CD4-positive, alpha-beta T cell (primary cell): ENCODE measurements at regions of chr5 and their contacts with region 1.

Region 1: DNA sequence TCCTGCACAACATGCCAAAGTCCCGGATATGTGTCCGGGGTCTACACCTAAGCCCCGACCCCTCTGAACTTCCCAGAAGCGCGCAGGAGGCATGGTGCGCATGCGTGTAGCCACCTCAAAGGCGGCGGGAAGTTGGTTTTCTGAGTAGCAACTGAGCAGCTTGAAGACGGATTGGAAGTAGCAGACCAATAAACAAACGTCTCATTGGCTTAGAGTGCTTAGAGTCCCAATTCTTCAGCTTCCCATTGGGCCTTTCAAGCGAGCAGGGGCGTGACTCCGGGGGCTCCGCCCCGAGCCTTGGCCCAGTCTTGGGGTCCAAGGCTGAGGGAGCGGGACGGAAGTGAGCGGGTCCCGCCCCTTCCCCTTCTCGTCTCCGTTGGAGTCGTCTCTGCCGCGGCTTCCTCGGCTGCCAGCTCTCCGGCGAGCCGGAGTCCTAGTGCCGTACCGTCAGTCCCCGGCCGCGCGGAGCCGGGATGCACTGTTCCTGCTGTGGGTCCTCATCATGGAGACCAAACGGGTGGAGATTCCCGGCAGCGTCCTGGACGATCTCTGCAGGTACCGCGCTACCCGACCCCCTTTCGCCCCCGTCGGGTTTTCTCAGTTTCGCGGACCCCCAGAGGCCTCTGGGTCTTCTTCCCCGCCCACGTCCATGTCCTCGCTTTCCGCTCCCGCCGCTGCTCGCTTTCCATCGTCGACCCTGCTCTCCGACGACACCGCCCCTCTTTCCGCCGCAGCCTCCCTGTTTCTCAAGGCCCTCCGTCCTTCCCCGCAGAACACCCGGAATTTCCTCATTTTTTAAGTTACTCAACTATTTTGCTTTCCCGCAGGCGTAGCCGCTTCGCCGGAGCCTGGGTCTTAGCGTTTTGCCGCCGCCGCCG is at the start of gene DCP2:
- DNase-seq: peak; percentile 87 to 99 (median 94)
- ATAC-seq: peak; percentile 93
- H3K4me3 ChIP-seq: peak within 1 kb of the TSS; percentile 92
- H3K4me3 Mint-ChIP-seq: peak within 1 kb of the TSS; percentile 100
- H3K27ac ChIP-seq: peak within 1 kb of the TSS; percentile 72 to 78
- H3K27ac Mint-ChIP-seq: peak within 1 kb of the TSS; percentile 96
- H3K4me1 ChIP-seq: peaks cover 15% of the 10 kb centered on the region
- H3K4me1 Mint-ChIP-seq: peaks cover 56% of the 10 kb centered on the region
- H3K27me3 ChIP-seq: no peaks in the 10 kb centered on the region
- H3K27me3 Mint-ChIP-seq: no peaks in the 10 kb centered on the region
- CTCF ChIP-seq: no peak
- total RNA-seq, gene DCP2: 86.3 to 87.1 TPM

Region 2: GRCh38 chr5:112860929-112861637 is 115.6 kb before region 1 on chr5 and contains the start of gene SRP19:
- CTCF ChIA-PET with region 1: interaction called, 5 read pairs
- POLR2A ChIA-PET with region 1: interaction called, 21 read pairs
- intact Hi-C with region 1: loop called in 1 of 2 experiments (anchors 5 kb)
- DNase-seq: peak; percentile 82 to 97 (median 86)
- ATAC-seq: peak; percentile 93
- H3K4me3 ChIP-seq: peak within 1 kb of the TSS; percentile 94
- H3K4me3 Mint-ChIP-seq: peak within 1 kb of the TSS; percentile 92
- H3K27ac ChIP-seq: peak within 1 kb of the TSS; percentile 65 to 88
- H3K27ac Mint-ChIP-seq: peak within 1 kb of the TSS; percentile 93
- H3K4me1 ChIP-seq: peaks cover 24% of the 10 kb centered on the region
- H3K4me1 Mint-ChIP-seq: peaks cover 36% of the 10 kb centered on the region
- H3K27me3 ChIP-seq: no peaks in the 10 kb centered on the region
- H3K27me3 Mint-ChIP-seq: peaks cover 12% of the 10 kb centered on the region
- CTCF ChIP-seq: no peak
- total RNA-seq, gene SRP19: 40.2 to 40.8 TPM

Region 3: GRCh38 chr5:112930082-112930344 is 46.7 kb before region 1 on chr5:
- CTCF ChIA-PET with region 1: no interaction called
- POLR2A ChIA-PET with region 1: interaction called, 13 read pairs
- intact Hi-C with region 1: no loop called
- DNase-seq: peak in 6 of 14 experiments; percentile 10 to 80 (median 58)
- ATAC-seq: peak; percentile 89
- H3K4me3 ChIP-seq: no peak overlapping the region
- H3K4me3 Mint-ChIP-seq: peak overlapping the region; percentile 44
- H3K27ac ChIP-seq: peak overlapping the region in 1 of 2 donors; percentile 1
- H3K27ac Mint-ChIP-seq: peak overlapping the region; percentile 7
- H3K4me1 ChIP-seq: peaks cover 40% of the 10 kb centered on the region
- H3K4me1 Mint-ChIP-seq: peaks cover 51% of the 10 kb centered on the region
- H3K27me3 ChIP-seq: no peaks in the 10 kb centered on the region
- H3K27me3 Mint-ChIP-seq: no peaks in the 10 kb centered on the region
- CTCF ChIP-seq: no peak

Region 4: GRCh38 chr5:112995764-112996618 is 19.3 kb after region 1 on chr5:
- CTCF ChIA-PET with region 1: interaction called, 10 read pairs
- POLR2A ChIA-PET with region 1: interaction called, 11 read pairs
- intact Hi-C with region 1: no loop called
- DNase-seq: peak; percentile 60 to 84 (median 76)
- ATAC-seq: peak; percentile 85
- H3K4me3 ChIP-seq: no peak overlapping the region
- H3K4me3 Mint-ChIP-seq: no peak overlapping the region
- H3K27ac ChIP-seq: no peak overlapping the region
- H3K27ac Mint-ChIP-seq: no peak overlapping the region
- H3K4me1 ChIP-seq: no peaks in the 10 kb centered on the region
- H3K4me1 Mint-ChIP-seq: peaks cover 52% of the 10 kb centered on the region
- H3K27me3 ChIP-seq: no peaks in the 10 kb centered on the region
- H3K27me3 Mint-ChIP-seq: no peaks in the 10 kb centered on the region
- CTCF ChIP-seq: peak; percentile 98

Region 5: GRCh38 chr5:113022661-113023060 is 46.0 kb after region 1 on chr5:
- CTCF ChIA-PET with region 1: no interaction called
- POLR2A ChIA-PET with region 1: interaction called, 18 read pairs
- intact Hi-C with region 1: loop called in 1 of 2 experiments (anchors 2 kb)
- DNase-seq: peak in 4 of 14 experiments; percentile 1 to 87 (median 78)
- ATAC-seq: peak; percentile 86
- H3K4me3 ChIP-seq: no peak overlapping the region
- H3K4me3 Mint-ChIP-seq: peak overlapping the region; percentile 57
- H3K27ac ChIP-seq: peak overlapping the region; percentile 18 to 71
- H3K27ac Mint-ChIP-seq: peak overlapping the region; percentile 87
- H3K4me1 ChIP-seq: peaks cover 20% of the 10 kb centered on the region
- H3K4me1 Mint-ChIP-seq: peaks cover 77% of the 10 kb centered on the region
- H3K27me3 ChIP-seq: no peaks in the 10 kb centered on the region
- H3K27me3 Mint-ChIP-seq: no peaks in the 10 kb centered on the region
- CTCF ChIP-seq: no peak

Region 6: DNA sequence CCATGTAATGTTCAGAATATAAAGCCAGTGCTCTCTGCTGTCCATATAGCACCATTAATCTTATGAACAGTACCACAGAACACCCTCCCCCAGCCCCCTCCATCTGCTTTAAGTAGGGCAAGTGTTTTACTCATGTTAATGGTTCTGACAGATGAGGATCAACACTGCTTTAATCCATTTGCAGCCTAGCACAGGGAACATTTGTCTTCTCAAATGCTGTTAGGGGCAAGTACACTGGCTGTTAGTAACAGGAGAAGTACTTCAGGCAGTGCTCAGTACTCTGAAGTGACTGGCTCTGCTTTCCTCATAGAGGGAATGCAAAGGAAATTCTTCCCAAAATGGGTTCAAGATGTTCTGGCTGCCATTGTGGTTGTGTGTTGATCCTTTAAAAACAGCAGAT is 202.5 kb after region 1 on chr5:
- CTCF ChIA-PET with region 1: no interaction called
- POLR2A ChIA-PET with region 1: no interaction called
- intact Hi-C with region 1: no loop called
- DNase-seq: no peak
- ATAC-seq: no peak
- H3K4me3 ChIP-seq: no peak overlapping the region
- H3K4me3 Mint-ChIP-seq: no peak overlapping the region
- H3K27ac ChIP-seq: no peak overlapping the region
- H3K27ac Mint-ChIP-seq: no peak overlapping the region
- H3K4me1 ChIP-seq: no peaks in the 10 kb centered on the region
- H3K4me1 Mint-ChIP-seq: peaks cover 8% of the 10 kb centered on the region
- H3K27me3 ChIP-seq: no peaks in the 10 kb centered on the region
- H3K27me3 Mint-ChIP-seq: no peaks in the 10 kb centered on the region
- CTCF ChIP-seq: no peak

Region 7: GRCh38 chr5:113330533-113331208 is 354.0 kb after region 1 on chr5:
- CTCF ChIA-PET with region 1: no interaction called
- POLR2A ChIA-PET with region 1: interaction called, 3 read pairs
- intact Hi-C with region 1: loop called in 1 of 2 experiments (anchors 5 kb)
- DNase-seq: peak in 4 of 14 experiments; percentile 14 to 78 (median 77)
- ATAC-seq: peak; percentile 90
- H3K4me3 ChIP-seq: no peak overlapping the region
- H3K4me3 Mint-ChIP-seq: no peak overlapping the region
- H3K27ac ChIP-seq: no peak overlapping the region
- H3K27ac Mint-ChIP-seq: peak overlapping the region; percentile 60
- H3K4me1 ChIP-seq: no peaks in the 10 kb centered on the region
- H3K4me1 Mint-ChIP-seq: peaks cover 21% of the 10 kb centered on the region
- H3K27me3 ChIP-seq: no peaks in the 10 kb centered on the region
- H3K27me3 Mint-ChIP-seq: no peaks in the 10 kb centered on the region
- CTCF ChIP-seq: peak; percentile 76